MCF 10A (cell line): ENCODE measurements at regions of chrX and their contacts with region 1.

Region 1: GRCh38 chrX:143757375-143757774 is 36.8 kb upstream of the SPANXN2 start:
- DNase-seq: no peak
- H3K4me3 Mint-ChIP-seq: no peak overlapping the region
- H3K27ac Mint-ChIP-seq: no peak overlapping the region
- H3K4me1 Mint-ChIP-seq: peaks cover 13% of the 10 kb centered on the region
- H3K27me3 Mint-ChIP-seq: no peaks in the 10 kb centered on the region
- CTCF ChIP-seq: no peak

Region 2: GRCh38 chrX:143296521-143296920 is 460.9 kb before region 1 on chrX:
- CTCF ChIA-PET with region 1: no interaction called
- POLR2A ChIA-PET with region 1: no interaction called
- intact Hi-C with region 1: no loop called
- DNase-seq: no peak
- H3K4me3 Mint-ChIP-seq: no peak overlapping the region
- H3K27ac Mint-ChIP-seq: no peak overlapping the region
- H3K4me1 Mint-ChIP-seq: no peaks in the 10 kb centered on the region
- H3K27me3 Mint-ChIP-seq: no peaks in the 10 kb centered on the region
- CTCF ChIP-seq: no peak

Region 3: DNA sequence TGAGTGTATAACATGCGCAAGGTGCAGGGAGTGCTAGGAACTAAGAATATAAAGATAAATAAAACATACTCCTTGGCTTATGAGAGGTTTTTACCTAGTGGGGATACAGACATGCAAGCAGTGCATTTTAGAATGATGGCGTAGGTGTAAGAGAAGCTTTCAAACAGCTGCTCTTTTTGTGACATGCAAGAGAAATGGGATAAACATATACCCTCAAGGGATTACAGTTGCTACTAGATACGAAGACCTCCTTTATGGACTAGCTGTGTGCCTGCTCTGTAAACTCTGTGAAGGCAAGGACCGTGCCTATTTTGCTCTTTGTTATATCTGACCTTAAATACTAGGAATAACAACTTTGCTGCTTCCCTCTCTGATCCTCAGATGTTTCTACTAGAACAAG is 82.4 kb before region 1 on chrX:
- CTCF ChIA-PET with region 1: interaction called, 3 read pairs
- POLR2A ChIA-PET with region 1: no interaction called
- intact Hi-C with region 1: loop called (anchors 10 kb)
- DNase-seq: no peak
- H3K4me3 Mint-ChIP-seq: no peak overlapping the region
- H3K27ac Mint-ChIP-seq: no peak overlapping the region
- H3K4me1 Mint-ChIP-seq: no peaks in the 10 kb centered on the region
- H3K27me3 Mint-ChIP-seq: no peaks in the 10 kb centered on the region
- CTCF ChIP-seq: no peak

Region 4: GRCh38 chrX:144040793-144041192 is 283.4 kb after region 1 on chrX:
- CTCF ChIA-PET with region 1: no interaction called
- POLR2A ChIA-PET with region 1: no interaction called
- intact Hi-C with region 1: no loop called
- DNase-seq: no peak
- H3K4me3 Mint-ChIP-seq: no peak overlapping the region
- H3K27ac Mint-ChIP-seq: no peak overlapping the region
- H3K4me1 Mint-ChIP-seq: no peaks in the 10 kb centered on the region
- H3K27me3 Mint-ChIP-seq: no peaks in the 10 kb centered on the region
- CTCF ChIP-seq: no peak